GM12878 (cell line): ENCODE measurements at regions of chr10 and their contacts with region 1.

Region 1: GRCh38 chr10:61750929-61751471 is 88.3 kb downstream of the CABCOCO1 start:
- DNase-seq: peak; percentile 27
- ATAC-seq: peak; percentile 98
- H3K4me3 ChIP-seq: no peak overlapping the region
- H3K27ac ChIP-seq: no peak overlapping the region
- H3K4me1 ChIP-seq: peaks cover 13% of the 10 kb centered on the region
- H3K27me3 ChIP-seq: no peaks in the 10 kb centered on the region
- CTCF ChIP-seq: peak; percentile 79 to 87 (median 83)
- EP300 ChIP-seq: no peak
- POLR2A ChIP-seq: no peak
- RAD21 ChIP-seq: peak; percentile 68

Region 2: GRCh38 chr10:61760943-61761824 is 10.2 kb after region 1 on chr10:
- CTCF ChIA-PET with region 1: interaction called, 13 read pairs
- POLR2A ChIA-PET with region 1: no interaction called
- RAD21 ChIA-PET with region 1: interaction called, 4 read pairs
- SMC1A ChIA-PET with region 1: interaction called, 4 read pairs
- in situ Hi-C with region 1: no loop called
- intact Hi-C with region 1: no loop called
- DNase-seq: no peak
- ATAC-seq: no peak
- H3K4me3 ChIP-seq: no peak overlapping the region
- H3K27ac ChIP-seq: no peak overlapping the region
- H3K4me1 ChIP-seq: no peaks in the 10 kb centered on the region
- H3K27me3 ChIP-seq: no peaks in the 10 kb centered on the region
- CTCF ChIP-seq: no peak
- EP300 ChIP-seq: no peak
- POLR2A ChIP-seq: no peak
- RAD21 ChIP-seq: no peak

Region 3: DNA sequence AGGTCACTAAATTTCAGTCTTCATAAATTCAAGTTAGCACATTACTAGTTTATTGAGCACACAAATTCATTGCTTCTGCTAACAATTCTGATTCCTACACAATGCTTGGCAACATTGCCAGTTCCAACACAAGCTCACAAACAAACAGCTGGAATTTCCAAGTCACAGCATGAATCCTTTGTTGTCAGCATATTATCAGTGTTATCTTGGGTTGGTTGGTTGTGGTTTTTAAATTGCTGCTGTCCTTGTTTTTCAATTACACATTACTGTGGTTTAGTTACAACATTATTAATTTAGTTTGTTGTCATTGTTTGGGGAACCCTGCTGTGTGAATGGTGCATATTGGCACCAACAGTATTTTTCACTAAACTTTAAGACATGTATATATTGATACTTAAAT is 64.5 kb after region 1 on chr10:
- CTCF ChIA-PET with region 1: interaction called, 3 read pairs
- POLR2A ChIA-PET with region 1: no interaction called
- RAD21 ChIA-PET with region 1: no interaction called
- SMC1A ChIA-PET with region 1: no interaction called
- in situ Hi-C with region 1: no loop called
- intact Hi-C with region 1: loop called (anchors 5 kb)
- DNase-seq: no peak
- ATAC-seq: no peak
- H3K4me3 ChIP-seq: no peak overlapping the region
- H3K27ac ChIP-seq: no peak overlapping the region
- H3K4me1 ChIP-seq: no peaks in the 10 kb centered on the region
- H3K27me3 ChIP-seq: no peaks in the 10 kb centered on the region
- CTCF ChIP-seq: no peak
- EP300 ChIP-seq: no peak
- POLR2A ChIP-seq: no peak
- RAD21 ChIP-seq: no peak

Region 4: DNA sequence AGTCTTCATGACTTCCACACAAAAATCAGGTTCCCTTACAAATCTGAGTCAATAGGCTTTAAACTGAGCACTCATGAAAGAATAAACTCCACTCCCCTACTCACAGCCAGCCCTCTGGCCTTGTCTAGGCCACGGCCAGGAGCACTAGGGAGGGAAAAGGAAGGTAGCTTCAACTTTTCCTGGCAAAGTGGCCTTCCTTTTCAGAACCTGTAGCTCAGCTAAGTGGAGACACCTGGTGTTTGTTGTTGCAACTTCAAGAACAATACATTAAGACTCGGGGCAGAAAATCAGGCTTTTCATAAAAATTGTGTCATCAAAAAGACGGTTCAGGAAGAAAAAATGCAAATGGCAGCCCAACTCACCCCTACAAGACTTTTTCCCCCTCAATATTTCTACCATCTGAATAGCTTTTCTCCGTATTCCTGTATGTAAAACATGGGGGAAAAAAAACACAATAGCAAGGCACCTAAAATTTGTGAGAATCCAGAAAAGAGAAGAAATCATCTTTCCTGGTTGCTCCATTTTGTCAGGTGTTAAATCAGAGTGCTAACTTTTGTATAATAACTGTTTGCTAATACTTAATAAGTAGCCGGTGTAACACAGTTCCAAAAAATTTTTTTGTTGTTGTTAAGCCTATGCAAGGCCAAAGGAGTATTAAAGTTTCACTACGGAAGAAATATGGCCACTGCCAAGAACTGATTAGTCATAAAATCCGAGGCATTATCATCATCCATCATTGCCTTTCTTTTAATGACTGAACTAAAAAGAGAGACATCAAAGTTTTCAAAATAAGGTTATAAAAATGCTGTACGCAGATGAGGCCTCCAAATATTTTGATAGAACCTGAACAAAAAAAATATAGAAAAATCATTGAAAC is 84.3 kb after region 1 on chr10:
- CTCF ChIA-PET with region 1: interaction called, 16 read pairs
- POLR2A ChIA-PET with region 1: no interaction called
- RAD21 ChIA-PET with region 1: interaction called, 7 read pairs
- SMC1A ChIA-PET with region 1: no interaction called
- in situ Hi-C with region 1: no loop called
- intact Hi-C with region 1: loop called (anchors 1 kb)
- DNase-seq: peak; percentile 7
- ATAC-seq: peak; percentile 76
- H3K4me3 ChIP-seq: no peak overlapping the region
- H3K27ac ChIP-seq: no peak overlapping the region
- H3K4me1 ChIP-seq: no peaks in the 10 kb centered on the region
- H3K27me3 ChIP-seq: no peaks in the 10 kb centered on the region
- CTCF ChIP-seq: peak; percentile 49 to 55 (median 52); a peak in 5 of 6 replicates
- EP300 ChIP-seq: no peak
- POLR2A ChIP-seq: no peak
- RAD21 ChIP-seq: peak; percentile 73

Region 5: DNA sequence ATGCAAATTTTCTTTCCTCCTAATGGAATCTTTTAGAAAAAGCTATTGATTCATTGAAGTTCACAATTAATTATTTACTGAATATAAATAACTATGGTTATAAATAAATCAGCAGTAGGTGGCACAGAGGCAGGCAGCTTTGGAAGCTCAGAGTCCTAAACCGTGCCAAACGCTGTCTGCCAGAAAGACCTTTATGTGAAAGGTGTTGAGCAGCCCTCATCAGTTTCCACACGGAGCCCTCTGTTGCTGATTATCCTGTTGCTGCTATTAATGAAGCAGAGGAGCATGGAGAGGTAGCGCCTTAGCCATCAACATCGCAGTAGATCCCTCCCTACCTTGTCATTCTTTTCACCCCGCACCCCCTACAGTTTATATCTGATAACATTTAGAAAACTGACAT is 466.7 kb after region 1 on chr10:
- CTCF ChIA-PET with region 1: no interaction called
- POLR2A ChIA-PET with region 1: no interaction called
- RAD21 ChIA-PET with region 1: no interaction called
- SMC1A ChIA-PET with region 1: no interaction called
- in situ Hi-C with region 1: no loop called
- intact Hi-C with region 1: no loop called
- DNase-seq: no peak
- ATAC-seq: no peak
- H3K4me3 ChIP-seq: no peak overlapping the region
- H3K27ac ChIP-seq: no peak overlapping the region
- H3K4me1 ChIP-seq: no peaks in the 10 kb centered on the region
- H3K27me3 ChIP-seq: no peaks in the 10 kb centered on the region
- CTCF ChIP-seq: no peak
- EP300 ChIP-seq: no peak
- POLR2A ChIP-seq: no peak
- RAD21 ChIP-seq: no peak